SK-N-SH (cell line): ENCODE measurements at regions of chr20 and their contacts with region 1.

Region 1: DNA sequence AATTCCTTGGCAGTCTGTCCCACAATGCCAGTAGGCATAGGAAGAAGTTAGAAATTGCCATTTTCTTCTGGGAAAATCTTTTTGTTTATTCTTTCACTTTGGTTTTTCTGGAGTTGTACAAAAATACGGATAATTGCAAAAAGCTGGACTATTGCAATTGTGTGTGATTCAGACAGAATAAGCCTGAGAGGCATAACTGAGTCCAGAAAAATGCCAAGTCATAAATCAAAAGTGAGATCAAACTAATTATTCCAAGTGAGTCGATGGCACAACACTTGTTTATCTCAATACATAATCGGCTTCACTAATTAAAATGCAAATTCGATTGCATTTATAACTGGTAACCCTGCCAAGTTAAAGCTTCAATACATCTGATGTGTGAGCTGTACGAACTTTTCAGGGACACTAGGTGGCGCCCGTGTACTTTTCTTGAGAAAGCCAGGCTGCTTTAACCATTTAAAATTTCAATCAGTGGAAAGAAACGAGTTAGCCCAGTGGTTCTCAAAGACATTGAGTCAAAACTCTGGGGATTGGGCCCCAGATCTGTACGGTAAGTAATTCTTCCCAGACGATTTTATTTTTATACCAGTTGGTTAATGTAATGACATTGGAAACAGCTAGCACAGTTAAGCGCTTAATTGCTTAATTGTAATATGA is 102.6 kb downstream of the LAMP5 start:
- DNase-seq: peak; percentile 52
- H3K4me3 ChIP-seq: peak overlapping the region in 1 of 2 experiments; percentile 13; a peak in 1 of 4 replicates
- H3K27ac ChIP-seq: no peak overlapping the region
- H3K4me1 ChIP-seq: peaks cover 0 to 8% of the 10 kb centered on the region in 2 experiments; a peak in 2 of 4 replicates
- H3K27me3 ChIP-seq: no peaks in the 10 kb centered on the region
- CTCF ChIP-seq: peak; percentile 93
- EP300 ChIP-seq: no peak
- RAD21 ChIP-seq: peak; percentile 94

Region 2: GRCh38 chr20:9602847-9603183 is 14.1 kb before region 1 on chr20:
- CTCF ChIA-PET with region 1: interaction called, 26 read pairs
- POLR2A ChIA-PET with region 1: no interaction called
- DNase-seq: no peak
- H3K4me3 ChIP-seq: no peak overlapping the region
- H3K27ac ChIP-seq: no peak overlapping the region
- H3K4me1 ChIP-seq: peaks cover 0 to 5% of the 10 kb centered on the region in 2 experiments; a peak in 1 of 4 replicates
- H3K27me3 ChIP-seq: no peaks in the 10 kb centered on the region
- CTCF ChIP-seq: no peak
- EP300 ChIP-seq: no peak
- RAD21 ChIP-seq: no peak

Region 3: DNA sequence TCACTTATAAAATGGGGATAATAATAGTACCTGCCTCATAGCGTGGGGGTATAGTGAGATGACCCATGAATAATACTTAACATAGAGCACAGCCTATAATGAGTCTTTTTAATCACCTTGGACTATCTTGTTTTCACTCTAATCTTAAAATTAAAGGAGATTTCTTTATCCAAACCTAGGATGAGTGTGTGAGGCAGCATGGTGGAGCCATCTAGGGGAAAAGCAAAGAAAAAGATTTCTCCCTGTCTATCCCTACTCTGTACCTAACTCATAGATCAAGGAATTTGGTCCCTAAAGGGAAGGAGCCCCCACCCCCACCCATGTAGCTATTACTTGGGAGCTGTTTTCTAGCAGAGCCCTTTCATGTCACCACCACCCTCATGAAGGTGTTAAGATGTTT is 267.1 kb after region 1 on chr20:
- CTCF ChIA-PET with region 1: interaction called, 93 read pairs
- POLR2A ChIA-PET with region 1: no interaction called
- DNase-seq: peak; percentile 9
- H3K4me3 ChIP-seq: no peak overlapping the region
- H3K27ac ChIP-seq: no peak overlapping the region
- H3K4me1 ChIP-seq: no peaks in the 10 kb centered on the region
- H3K27me3 ChIP-seq: no peaks in the 10 kb centered on the region
- CTCF ChIP-seq: peak; percentile 38
- EP300 ChIP-seq: no peak
- RAD21 ChIP-seq: peak; percentile 65

Region 4: GRCh38 chr20:9912858-9913434 is 296.0 kb after region 1 on chr20:
- CTCF ChIA-PET with region 1: interaction called, 113 read pairs
- POLR2A ChIA-PET with region 1: no interaction called
- DNase-seq: peak; percentile 50
- H3K4me3 ChIP-seq: no peak overlapping the region
- H3K27ac ChIP-seq: no peak overlapping the region; a peak in 1 of 4 replicates
- H3K4me1 ChIP-seq: no peaks in the 10 kb centered on the region
- H3K27me3 ChIP-seq: peaks cover 2% of the 10 kb centered on the region; the same call in 1 of the 2 replicates
- CTCF ChIP-seq: peak; percentile 97
- EP300 ChIP-seq: no peak
- RAD21 ChIP-seq: peak; percentile 67

Region 5: DNA sequence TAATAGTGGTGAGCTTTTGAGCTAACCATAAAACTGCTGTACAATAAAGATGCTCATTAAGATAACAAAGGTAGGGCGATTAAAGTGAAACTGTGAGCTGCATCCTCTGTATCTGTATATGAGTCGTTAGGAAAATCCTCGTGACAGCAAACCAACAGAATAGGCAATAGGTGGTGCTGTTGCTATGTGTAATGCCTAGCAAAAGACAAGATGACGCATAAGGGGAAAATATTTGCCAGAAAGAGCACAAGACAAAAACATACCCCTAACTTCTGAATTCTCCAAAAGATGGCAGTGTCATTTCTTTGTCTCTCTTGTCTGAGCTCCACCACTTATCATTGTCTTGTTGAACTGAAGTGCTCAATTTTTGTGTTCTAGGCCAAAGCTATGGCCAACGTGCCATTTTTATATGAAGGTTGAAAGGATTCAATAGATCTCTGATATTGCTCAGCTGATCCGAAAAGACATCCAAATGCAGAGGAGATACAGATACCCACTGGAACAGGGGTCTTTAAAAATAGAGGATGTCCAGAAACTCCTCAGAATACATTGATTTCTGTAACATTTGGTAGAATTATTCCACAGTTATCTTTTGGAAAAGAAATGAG is 361.5 kb after region 1 on chr20:
- CTCF ChIA-PET with region 1: interaction called, 48 read pairs
- POLR2A ChIA-PET with region 1: no interaction called
- DNase-seq: peak; percentile 66
- H3K4me3 ChIP-seq: peak overlapping the region; percentile 6 to 16; a peak in 2 of 4 replicates
- H3K27ac ChIP-seq: no peak overlapping the region; a peak in 1 of 4 replicates
- H3K4me1 ChIP-seq: no peaks in the 10 kb centered on the region; a peak in 1 of 4 replicates
- H3K27me3 ChIP-seq: no peaks in the 10 kb centered on the region
- CTCF ChIP-seq: peak; percentile 94
- EP300 ChIP-seq: no peak
- RAD21 ChIP-seq: peak; percentile 99